ENCODE measurements at regions of chr17 and their contacts with region 1.

Region 1: GRCh38 chr17:7079581-7080455 is at the start of gene CLEC10A:
- DNase-seq: peak in 2 of 3 donors; percentile 51 to 60
- H3K4me3 ChIP-seq: peak within 1 kb of the TSS in 2 of 3 experiments; percentile 25 to 64
- H3K4me3 Mint-ChIP-seq: peak within 1 kb of the TSS; percentile 70 to 78
- H3K27ac ChIP-seq: peak within 1 kb of the TSS; percentile 47 to 50
- H3K27ac Mint-ChIP-seq: peak within 1 kb of the TSS; percentile 71 to 90 (median 78)
- H3K4me1 ChIP-seq: peaks cover 50 to 60% of the 10 kb centered on the region in 2 donors
- H3K4me1 Mint-ChIP-seq: peaks cover 63% of the 10 kb centered on the region
- H3K27me3 ChIP-seq: no peaks in the 10 kb centered on the region
- H3K27me3 Mint-ChIP-seq: peaks cover 2 to 10% (median 8%) of the 10 kb centered on the region in 3 donors
- CTCF ChIP-seq: no peak
- polyA plus RNA-seq, gene CLEC10A: 22.7 to 69.4 (median 61.9) TPM

Region 2: DNA sequence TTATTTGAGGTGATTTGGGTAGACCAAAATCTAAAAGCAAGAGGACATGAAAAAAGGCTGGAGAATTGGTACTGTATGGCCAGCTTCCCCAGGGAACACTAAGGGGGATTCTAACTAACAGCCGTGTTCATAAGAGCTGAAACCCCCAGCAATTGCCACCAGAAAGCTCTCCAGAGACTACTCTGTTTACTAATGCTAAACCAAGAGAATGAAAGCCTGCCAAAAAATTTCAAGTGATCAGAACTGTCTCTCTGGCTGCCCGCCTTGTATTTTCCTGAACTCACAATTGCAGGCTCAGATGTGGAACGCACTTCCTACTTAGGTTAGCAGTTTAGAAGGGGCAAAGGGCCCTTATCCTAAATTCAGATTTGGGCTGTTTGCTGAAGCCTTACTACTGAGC is 1526.6 kb after region 1 on chr17:
- intact Hi-C with region 1: loop called in 1 of 2 experiments (anchors 10 kb)
- DNase-seq: no peak
- H3K4me3 ChIP-seq: no peak overlapping the region
- H3K4me3 Mint-ChIP-seq: peak overlapping the region in 1 of 2 donors; percentile 7
- H3K27ac ChIP-seq: no peak overlapping the region
- H3K27ac Mint-ChIP-seq: no peak overlapping the region
- H3K4me1 ChIP-seq: no peaks in the 10 kb centered on the region
- H3K4me1 Mint-ChIP-seq: no peaks in the 10 kb centered on the region
- H3K27me3 ChIP-seq: peaks cover 0 to 12% of the 10 kb centered on the region in 2 donors
- H3K27me3 Mint-ChIP-seq: peaks cover 2 to 11% (median 11%) of the 10 kb centered on the region in 3 donors
- CTCF ChIP-seq: no peak

Measured in CD14-positive monocyte (primary cell).